Right cardiac atrium (tissue), 5 donors: ENCODE measurements at regions of chr1 and their contacts with region 1.

Region 1: GRCh38 chr1:91165033-91165654 is 143.3 kb upstream of the ZNF644 start:
- DNase-seq: peak; percentile 66 to 88 (median 87)
- ATAC-seq: peak; percentile 89 to 93
- H3K4me3 ChIP-seq: no peak overlapping the region
- H3K27ac ChIP-seq: no peak overlapping the region
- H3K4me1 ChIP-seq: no peaks in the 10 kb centered on the region
- H3K27me3 ChIP-seq: no peaks in the 10 kb centered on the region

Region 2: GRCh38 chr1:90114521-90115141 is 1050.5 kb before region 1 on chr1:
- intact Hi-C with region 1: loop called in 1 of 4 experiments (anchors 10 kb)
- DNase-seq: no peak
- ATAC-seq: no peak
- H3K4me3 ChIP-seq: no peak overlapping the region
- H3K27ac ChIP-seq: no peak overlapping the region
- H3K4me1 ChIP-seq: no peaks in the 10 kb centered on the region
- H3K27me3 ChIP-seq: no peaks in the 10 kb centered on the region

Region 3: DNA sequence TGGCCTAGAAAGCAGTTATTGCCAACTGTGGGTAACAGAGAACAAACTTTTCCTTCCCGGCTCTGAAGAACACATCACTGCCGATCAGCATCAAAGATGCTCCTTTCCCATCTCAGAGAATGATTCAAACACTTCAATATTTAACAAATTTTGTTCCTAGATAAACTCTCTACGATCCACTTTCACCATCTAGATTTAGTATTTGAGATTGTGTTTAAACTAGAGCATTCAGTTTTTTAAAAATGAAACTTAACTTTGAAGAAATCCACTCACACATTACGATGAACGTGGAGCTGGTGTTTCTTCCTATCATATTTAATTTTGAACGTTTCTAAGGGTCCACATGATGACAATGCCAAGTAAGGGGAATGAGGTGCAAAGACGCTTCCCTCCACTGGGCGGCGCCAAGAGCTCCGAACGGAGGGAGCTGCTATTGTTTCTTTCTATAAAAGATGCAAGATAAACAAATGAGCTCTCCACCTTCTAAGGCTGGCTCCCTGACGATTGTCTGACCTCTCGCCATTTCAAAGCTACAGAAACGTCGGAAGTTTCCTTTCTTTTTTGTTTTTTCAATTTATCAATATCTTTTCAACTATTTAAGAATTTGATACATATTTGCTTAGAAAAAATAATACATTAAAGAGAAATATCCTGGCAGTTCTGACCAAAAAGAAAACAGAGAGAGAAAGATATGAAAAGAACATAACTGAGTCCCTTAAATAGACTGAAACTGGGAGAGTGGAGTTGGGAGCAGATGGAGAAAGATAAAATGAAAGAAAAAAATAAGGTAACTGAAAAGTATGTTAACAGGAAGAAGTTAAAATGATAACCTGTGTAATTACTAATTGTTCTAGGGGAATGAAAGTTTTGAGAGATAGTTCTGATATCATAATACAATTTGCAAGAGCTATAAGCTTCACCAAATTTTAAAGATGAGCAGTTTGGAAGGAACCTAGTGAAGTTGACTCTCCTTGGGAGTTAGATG is 443.6 kb before region 1 on chr1:
- intact Hi-C with region 1: loop called in 1 of 4 experiments (anchors 10 kb)
- DNase-seq: peak; percentile 40 to 71 (median 59)
- ATAC-seq: peak in 1 of 2 donors; percentile 42
- H3K4me3 ChIP-seq: no peak overlapping the region
- H3K27ac ChIP-seq: no peak overlapping the region
- H3K4me1 ChIP-seq: peaks cover 4% of the 10 kb centered on the region
- H3K27me3 ChIP-seq: peaks cover 4% of the 10 kb centered on the region